ENCODE measurements at regions of chrX and their contacts with region 1.

Region 1: DNA sequence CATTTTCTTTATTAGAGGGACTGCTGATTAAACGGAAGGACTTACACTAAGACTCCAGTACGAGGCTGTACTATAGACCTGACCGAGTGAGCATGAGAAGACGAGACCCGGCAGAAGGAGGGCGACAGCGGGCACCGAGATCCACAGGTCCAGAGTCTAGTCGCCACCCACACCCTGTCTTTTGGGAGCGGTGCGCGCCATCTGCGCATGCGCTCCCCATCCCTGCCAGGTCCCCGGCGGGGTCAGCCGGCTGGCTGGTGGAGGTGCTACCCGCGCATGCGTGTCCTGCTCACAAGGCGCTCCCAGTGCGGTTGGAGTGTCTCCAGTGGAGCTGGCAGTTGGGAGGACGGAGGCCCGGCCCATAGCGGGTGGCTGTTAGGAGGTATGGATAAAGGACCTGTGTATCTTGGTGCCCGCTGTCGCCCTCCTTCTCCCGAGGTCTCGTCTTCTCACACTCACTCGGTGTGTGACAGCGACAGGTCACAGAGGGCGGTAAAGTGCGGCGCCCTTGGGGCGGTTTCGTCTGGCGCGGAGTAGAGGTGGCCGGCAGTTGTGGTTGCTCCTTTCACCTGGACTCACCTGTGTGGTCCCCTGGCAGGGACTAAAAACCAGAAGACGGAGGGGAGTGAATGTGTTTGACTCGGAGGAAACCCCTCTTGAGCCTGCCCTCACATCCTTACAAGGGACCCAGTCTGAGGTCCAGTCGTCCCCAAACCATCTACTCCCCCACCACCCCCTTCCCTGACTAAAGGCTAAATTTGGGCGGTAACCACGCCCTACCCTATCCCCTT is 7.6 kb upstream of the HSD17B10 start:
- DNase-seq: no peak
- H3K4me3 ChIP-seq: peak overlapping the region; percentile 40 to 54 (median 47)
- H3K27ac ChIP-seq: peak overlapping the region; percentile 64 to 83 (median 78)
- H3K4me1 ChIP-seq: peaks cover 3 to 24% (median 21%) of the 10 kb centered on the region in 4 donors
- H3K27me3 ChIP-seq: no peaks in the 10 kb centered on the region
- CTCF ChIP-seq: no peak
- EP300 ChIP-seq: no peak
- POLR2A ChIP-seq: no peak

Region 2: DNA sequence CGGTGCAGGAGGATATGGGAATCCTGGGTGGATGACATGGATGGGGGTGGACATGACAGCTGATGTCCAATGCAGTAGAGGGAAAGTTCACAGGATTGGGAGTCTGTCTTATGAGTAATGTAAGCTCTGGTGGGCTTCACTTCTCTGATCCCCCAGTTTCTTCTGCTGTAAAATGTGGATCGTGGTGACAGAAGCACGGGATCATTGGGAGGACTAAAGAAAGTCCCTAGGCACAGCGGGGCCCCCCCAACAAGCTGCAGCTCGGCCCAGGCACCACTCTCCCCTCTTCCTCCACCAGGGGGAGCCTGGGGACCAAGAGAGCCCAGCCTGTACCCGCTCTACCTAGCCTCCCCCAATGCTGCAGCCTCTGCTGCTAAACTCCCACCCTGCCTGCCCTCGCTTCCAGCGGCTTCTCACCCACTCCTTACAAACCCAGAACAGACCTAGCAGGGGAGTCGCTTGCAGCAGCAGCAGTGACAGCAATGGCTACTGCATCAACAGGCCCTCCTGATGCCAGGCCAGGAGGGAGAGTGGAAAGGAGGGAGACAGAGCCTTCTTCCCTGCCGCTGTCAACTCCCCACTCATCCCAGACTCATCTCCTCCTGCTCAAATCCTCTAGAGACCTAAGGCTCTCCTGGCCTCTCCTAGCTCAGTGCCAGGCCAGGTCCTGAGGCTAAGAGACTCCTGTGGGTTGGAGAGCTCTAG is 124.2 kb before region 1 on chrX:
- intact Hi-C with region 1: loop called (anchors 5 kb)
- DNase-seq: no peak
- H3K4me3 ChIP-seq: no peak overlapping the region
- H3K27ac ChIP-seq: no peak overlapping the region
- H3K4me1 ChIP-seq: peaks cover 0 to 39% (median 30%) of the 10 kb centered on the region in 4 donors
- H3K27me3 ChIP-seq: peaks cover 0 to 8% (median 3%) of the 10 kb centered on the region in 4 donors
- CTCF ChIP-seq: peak; percentile 63 to 83 (median 78)
- EP300 ChIP-seq: no peak
- POLR2A ChIP-seq: no peak

Region 3: GRCh38 chrX:53347948-53348347 is 93.8 kb before region 1 on chrX:
- intact Hi-C with region 1: no loop called
- DNase-seq: no peak
- H3K4me3 ChIP-seq: no peak overlapping the region
- H3K27ac ChIP-seq: no peak overlapping the region
- H3K4me1 ChIP-seq: no peaks in the 10 kb centered on the region
- H3K27me3 ChIP-seq: no peaks in the 10 kb centered on the region
- CTCF ChIP-seq: no peak
- EP300 ChIP-seq: no peak
- POLR2A ChIP-seq: no peak

Region 4: GRCh38 chrX:54439967-54440871 is 998.5 kb after region 1 on chrX and contains the start of gene TSR2:
- intact Hi-C with region 1: no loop called
- DNase-seq: peak; percentile 93
- H3K4me3 ChIP-seq: peak within 1 kb of the TSS; percentile 77 to 89 (median 78)
- H3K27ac ChIP-seq: peak within 1 kb of the TSS; percentile 68 to 74 (median 71)
- H3K4me1 ChIP-seq: peaks cover 11 to 27% (median 24%) of the 10 kb centered on the region in 4 donors
- H3K27me3 ChIP-seq: no peaks in the 10 kb centered on the region
- CTCF ChIP-seq: no peak
- EP300 ChIP-seq: no peak
- POLR2A ChIP-seq: no peak
- total RNA-seq, gene TSR2: 28.2 to 34.0 (median 31.3) TPM

Measured in esophagus muscularis mucosa (tissue), 4 donors.